IMR-90 (cell line): ENCODE measurements at regions of chr10 and their contacts with region 1.

Region 1: GRCh38 chr10:132307823-132308587 is at the start of gene STK32C:
- DNase-seq: peak; percentile 85
- ATAC-seq: peak; percentile 93
- H3K4me3 ChIP-seq: peak within 1 kb of the TSS; percentile 98
- H3K27ac ChIP-seq: peak within 1 kb of the TSS; percentile 45; the same call in 1 of the 2 replicates
- H3K4me1 ChIP-seq: peaks cover 5% of the 10 kb centered on the region; the same call in 1 of the 2 replicates
- H3K27me3 ChIP-seq: peaks cover 23% of the 10 kb centered on the region; the same call in 1 of the 2 replicates
- CTCF ChIP-seq: no peak
- POLR2A ChIP-seq: no peak
- RAD21 ChIP-seq: no peak; the same call in 1 of the 2 replicates
- total RNA-seq, gene STK32C: 5.0 TPM in 2 replicates

Region 2: GRCh38 chr10:131726076-131726880 is 581.7 kb before region 1 on chr10:
- CTCF ChIA-PET with region 1: no interaction called
- POLR2A ChIA-PET with region 1: no interaction called
- dilution Hi-C with region 1: no loop called
- in situ Hi-C with region 1: no loop called
- intact Hi-C with region 1: no loop called
- DNase-seq: no peak
- ATAC-seq: no peak
- H3K4me3 ChIP-seq: no peak overlapping the region
- H3K27ac ChIP-seq: no peak overlapping the region
- H3K4me1 ChIP-seq: no peaks in the 10 kb centered on the region
- H3K27me3 ChIP-seq: no peaks in the 10 kb centered on the region
- CTCF ChIP-seq: no peak
- POLR2A ChIP-seq: no peak
- RAD21 ChIP-seq: no peak

Region 3: DNA sequence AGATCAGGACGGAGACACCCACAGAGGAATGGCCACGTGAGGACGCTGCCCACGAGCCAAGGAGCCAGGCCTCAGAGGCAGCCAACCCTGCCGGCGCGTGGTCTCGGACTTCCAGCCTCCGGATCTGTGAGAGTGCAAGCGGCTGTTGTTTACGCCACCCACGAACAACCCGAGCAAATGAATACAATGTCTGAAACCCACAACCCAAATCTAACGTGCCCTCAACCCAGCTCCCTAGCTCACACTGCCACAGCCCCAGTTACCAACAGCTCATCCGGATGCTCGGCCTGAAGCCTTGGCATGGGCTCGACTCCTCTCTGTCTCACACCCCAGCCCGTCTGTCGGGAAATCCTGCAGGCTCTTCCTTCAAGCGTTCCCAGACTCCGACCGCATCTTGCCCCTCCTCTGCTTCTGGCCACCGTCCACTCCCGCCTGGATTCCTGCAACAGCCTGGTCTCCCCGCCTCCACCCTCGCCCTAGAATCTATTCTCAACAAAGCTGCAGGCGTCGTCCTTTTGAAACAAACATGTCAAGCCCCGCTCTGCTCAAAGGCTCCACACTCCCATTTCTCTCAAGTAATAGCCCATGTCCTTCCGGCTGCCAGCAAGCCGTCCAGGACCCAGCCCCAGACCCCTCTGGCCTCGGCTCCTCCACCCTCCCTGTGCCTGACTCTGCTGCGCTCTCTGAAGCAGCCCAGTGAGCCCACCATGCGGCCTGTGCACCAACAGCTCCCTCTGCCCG is 35.6 kb before region 1 on chr10:
- CTCF ChIA-PET with region 1: no interaction called
- POLR2A ChIA-PET with region 1: no interaction called
- dilution Hi-C with region 1: no loop called
- in situ Hi-C with region 1: no loop called
- intact Hi-C with region 1: loop called (anchors 5 kb)
- DNase-seq: peak; percentile 60
- ATAC-seq: peak; percentile 89
- H3K4me3 ChIP-seq: no peak overlapping the region
- H3K27ac ChIP-seq: no peak overlapping the region
- H3K4me1 ChIP-seq: peaks cover 5% of the 10 kb centered on the region; the same call in 1 of the 2 replicates
- H3K27me3 ChIP-seq: peaks cover 5% of the 10 kb centered on the region
- CTCF ChIP-seq: no peak
- POLR2A ChIP-seq: no peak
- RAD21 ChIP-seq: 0 out of 2 replicates have a peak, but pooled peaks have one; percentile 0